Head of caudate nucleus (tissue), 42 donors: ENCODE measurements at regions of chr3 and their contacts with region 1.

Region 1: GRCh38 chr3:49021813-49022687 is at the start of gene NDUFAF3:
- DNase-seq: peak; percentile 79 to 97 (median 94)

Region 2: GRCh38 chr3:48989796-48990635 is 32.0 kb before region 1 on chr3 and contains the start of gene P4HTM:
- intact Hi-C with region 1: loop called (anchors 5 kb)
- DNase-seq: peak; percentile 83 to 98 (median 92)

Region 3: DNA sequence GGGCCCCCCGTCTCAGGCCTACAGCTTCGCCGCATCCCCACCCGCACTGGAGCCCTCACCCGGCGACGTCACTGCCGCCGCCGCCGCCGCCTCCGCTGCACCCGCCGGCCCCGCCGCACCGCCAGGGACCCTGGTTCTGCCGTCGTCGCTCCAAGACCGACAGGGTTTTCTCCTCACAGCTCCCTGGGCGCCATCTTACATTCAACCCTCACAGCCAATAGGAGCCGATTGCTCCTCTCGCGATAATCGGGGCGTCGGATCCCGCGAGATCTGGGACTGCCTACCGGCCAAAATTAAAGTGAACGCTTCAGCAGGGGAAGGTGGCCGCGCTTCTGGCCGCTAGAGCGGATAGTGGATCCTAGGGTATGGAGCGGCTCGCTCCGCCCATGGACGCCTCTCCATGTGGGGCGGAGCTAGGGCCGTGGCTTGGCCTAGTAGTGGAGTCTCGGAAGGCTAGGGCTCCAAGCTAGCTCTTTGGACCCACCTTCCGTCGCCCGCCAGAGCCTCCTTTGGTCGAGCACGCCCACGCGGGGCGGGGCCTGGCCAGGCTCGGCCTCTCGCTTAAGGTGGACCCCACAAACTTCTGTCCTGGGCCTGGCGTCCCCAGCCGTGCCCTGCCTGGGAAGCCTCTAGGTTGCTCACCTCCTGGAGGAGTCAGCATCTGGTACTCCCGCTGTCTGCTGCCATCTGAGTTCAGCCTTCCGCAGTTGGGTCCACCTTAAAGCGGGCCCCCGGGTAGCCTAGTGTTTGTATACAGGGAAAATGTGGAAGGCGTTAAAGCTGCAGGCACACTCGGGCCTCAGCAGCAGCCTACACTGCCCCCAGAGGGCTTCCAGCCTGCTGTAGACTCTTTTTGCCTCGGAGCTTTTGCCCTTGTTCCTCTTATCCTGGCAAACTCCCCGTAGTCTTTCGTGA is 72.1 kb after region 1 on chr3 and contains the start of gene QRICH1:
- intact Hi-C with region 1: loop called (anchors 10 kb)
- DNase-seq: peak; percentile 90 to 98 (median 96)

Region 4: DNA sequence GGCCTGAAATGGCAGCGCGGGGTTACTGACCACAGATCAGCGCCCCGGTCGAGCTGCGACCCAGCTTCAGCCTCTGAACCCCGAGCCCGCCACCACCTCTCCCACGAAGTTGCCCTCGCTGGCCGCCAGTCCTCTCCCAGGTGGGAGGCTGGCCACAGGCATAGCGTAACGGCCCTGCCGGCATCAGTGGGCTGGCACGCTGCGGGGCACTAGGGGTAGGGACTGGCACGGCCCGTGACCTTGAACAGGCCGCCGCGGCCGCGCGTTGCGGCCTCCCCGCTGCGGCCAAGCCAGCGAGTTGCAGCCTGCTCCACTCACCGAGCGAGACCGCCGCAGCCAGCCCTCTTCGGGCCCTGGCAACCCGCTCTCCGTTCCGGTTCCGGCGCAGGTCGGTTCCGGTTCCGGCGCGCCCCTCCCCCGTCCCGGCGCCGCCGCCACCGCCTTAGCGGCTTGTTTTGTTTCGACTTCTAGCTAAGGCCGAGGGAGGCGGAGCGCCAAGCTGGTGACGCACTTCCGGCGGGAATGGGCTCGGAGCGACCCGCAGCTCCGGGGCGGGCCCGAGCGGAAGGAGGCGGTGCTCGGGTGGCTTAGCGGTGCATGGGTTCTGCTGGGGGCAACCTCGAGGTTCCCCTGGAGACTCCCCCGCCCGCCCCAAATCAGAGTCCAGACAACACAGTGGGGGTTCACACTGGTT is 98.5 kb after region 1 on chr3 and contains the start of gene USP19:
- intact Hi-C with region 1: no loop called
- DNase-seq: peak; percentile 89 to 98 (median 96)

Region 5: GRCh38 chr3:49411968-49412631 is 390.1 kb after region 1 on chr3 and contains the starts of genes RHOA and TCTA:
- intact Hi-C with region 1: loop called (anchors 10 kb)
- DNase-seq: peak; percentile 95 to 100 (median 99)